Activated CD8-positive, alpha-beta T cell treated with anti-CD3 and anti-CD28 coated beads, Interleukin-2, amount 10 ng/mL, durations not matched to agents 7 days and 5 days (primary cell): ENCODE measurements at regions of chr17 and their contacts with region 1.

Region 1: DNA sequence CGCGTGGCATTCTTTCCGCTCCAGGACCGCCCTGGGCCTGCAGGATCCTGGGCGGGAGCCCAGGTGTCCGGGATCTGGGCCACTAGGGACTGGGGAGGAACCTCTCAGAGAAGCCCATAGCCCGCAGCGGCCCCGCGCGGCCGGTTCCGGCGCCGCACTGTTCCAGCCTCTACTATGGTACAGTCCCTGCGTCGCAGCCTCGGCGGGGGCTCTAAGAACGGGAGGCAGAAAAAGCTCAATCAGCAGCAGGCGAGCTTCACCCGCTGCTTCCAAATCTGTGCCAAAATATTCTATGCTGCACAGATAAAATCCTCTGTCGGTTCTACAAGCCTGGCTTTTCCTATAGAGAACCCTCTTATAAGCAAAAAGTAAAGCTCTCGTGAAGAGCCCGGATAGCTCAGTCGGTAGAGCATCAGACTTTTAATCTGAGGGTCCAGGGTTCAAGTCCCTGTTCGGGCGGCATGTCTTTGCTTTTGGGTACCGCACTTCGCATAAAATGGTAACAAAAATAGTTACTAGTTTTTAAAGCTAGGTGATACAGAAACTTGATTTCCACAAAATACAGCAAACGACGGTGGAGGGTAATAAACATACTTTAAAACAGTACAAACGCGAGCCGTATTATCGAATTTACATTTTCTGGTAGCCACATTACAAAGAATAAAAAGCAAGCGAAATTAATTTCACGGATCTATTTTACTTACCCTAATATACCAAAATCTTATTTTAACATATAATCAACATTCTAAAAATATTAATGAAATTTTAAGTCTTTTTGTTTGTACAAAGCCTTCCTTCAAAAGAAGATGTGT is 661 bp upstream of the ALOXE3 start:
- DNase-seq: peak; percentile 90
- ATAC-seq: peak; percentile 70
- H3K4me3 Mint-ChIP-seq: peak overlapping the region; percentile 89
- H3K27ac Mint-ChIP-seq: peak overlapping the region; percentile 95
- H3K4me1 Mint-ChIP-seq: peaks cover 51% of the 10 kb centered on the region
- H3K27me3 Mint-ChIP-seq: peaks cover 57% of the 10 kb centered on the region

Region 2: DNA sequence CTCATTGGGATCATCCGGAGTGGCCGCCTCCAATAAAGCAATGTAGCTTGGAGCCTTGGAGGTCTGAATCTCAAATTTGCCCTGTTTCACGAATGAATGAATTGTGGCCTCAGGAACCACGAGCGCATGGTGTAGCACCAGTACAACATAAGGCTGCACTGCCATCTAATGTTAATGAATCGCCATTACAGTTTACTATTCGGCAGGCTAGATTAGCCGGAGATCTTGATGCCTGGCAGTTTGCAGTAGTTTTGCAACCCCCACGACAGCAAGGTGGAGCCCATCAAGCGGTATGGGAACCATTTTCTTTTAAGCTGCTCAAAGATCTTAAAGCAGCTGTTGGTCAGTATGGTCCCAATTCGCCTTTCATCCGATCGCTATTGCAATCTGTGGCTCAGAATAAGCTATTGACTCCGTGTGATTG is 61.3 kb before region 1 on chr17:
- CTCF ChIA-PET with region 1: interaction called, 90 read pairs
- POLR2A ChIA-PET with region 1: no interaction called
- DNase-seq: peak; percentile 59
- ATAC-seq: peak; percentile 72
- H3K4me3 Mint-ChIP-seq: no peak overlapping the region
- H3K27ac Mint-ChIP-seq: no peak overlapping the region
- H3K4me1 Mint-ChIP-seq: peaks cover 32% of the 10 kb centered on the region
- H3K27me3 Mint-ChIP-seq: peaks cover 44% of the 10 kb centered on the region

Region 3: GRCh38 chr17:8091033-8091687 is 27.8 kb before region 1 on chr17:
- CTCF ChIA-PET with region 1: interaction called, 93 read pairs
- POLR2A ChIA-PET with region 1: no interaction called
- DNase-seq: no peak
- ATAC-seq: no peak
- H3K4me3 Mint-ChIP-seq: no peak overlapping the region
- H3K27ac Mint-ChIP-seq: no peak overlapping the region
- H3K4me1 Mint-ChIP-seq: peaks cover 6% of the 10 kb centered on the region
- H3K27me3 Mint-ChIP-seq: peaks cover 24% of the 10 kb centered on the region

Region 4: DNA sequence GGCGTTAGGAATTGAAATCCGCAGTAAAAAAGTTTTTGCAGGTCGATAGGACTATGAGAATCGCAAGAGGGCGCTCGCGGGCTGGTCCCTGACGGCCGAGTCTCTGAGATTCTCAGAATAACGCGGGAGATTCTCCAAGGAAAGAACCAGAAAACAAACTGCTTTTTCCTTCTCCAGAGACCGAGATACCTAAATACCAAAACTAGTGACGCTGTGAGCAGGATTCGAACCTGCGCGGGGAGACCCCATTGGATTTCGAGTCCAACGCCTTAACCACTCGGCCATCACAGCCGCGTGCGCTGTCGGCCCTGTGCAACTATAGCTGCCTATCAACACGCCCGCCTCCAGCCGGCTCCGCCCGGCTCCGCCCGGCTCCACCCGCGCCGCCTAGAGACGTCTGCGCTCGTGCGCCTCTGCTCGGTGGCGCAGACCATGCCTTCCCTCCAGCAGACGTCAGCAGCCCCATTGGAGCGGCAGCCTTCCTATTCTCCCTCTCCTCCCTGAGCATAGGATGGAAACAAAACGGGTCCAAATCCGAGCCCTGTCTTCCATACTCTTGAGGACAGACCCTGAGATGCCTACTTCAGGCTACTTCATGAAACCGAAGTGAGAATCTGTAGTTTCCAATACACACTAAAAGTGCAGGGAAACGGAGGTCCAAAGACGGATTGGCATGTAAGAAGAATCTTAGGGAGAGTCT is 19.8 kb after region 1 on chr17:
- CTCF ChIA-PET with region 1: interaction called, 52 read pairs
- POLR2A ChIA-PET with region 1: interaction called, 3 read pairs
- DNase-seq: peak; percentile 98
- ATAC-seq: peak; percentile 93
- H3K4me3 Mint-ChIP-seq: no peak overlapping the region
- H3K27ac Mint-ChIP-seq: no peak overlapping the region
- H3K4me1 Mint-ChIP-seq: peaks cover 5% of the 10 kb centered on the region
- H3K27me3 Mint-ChIP-seq: peaks cover 4% of the 10 kb centered on the region

Region 5: DNA sequence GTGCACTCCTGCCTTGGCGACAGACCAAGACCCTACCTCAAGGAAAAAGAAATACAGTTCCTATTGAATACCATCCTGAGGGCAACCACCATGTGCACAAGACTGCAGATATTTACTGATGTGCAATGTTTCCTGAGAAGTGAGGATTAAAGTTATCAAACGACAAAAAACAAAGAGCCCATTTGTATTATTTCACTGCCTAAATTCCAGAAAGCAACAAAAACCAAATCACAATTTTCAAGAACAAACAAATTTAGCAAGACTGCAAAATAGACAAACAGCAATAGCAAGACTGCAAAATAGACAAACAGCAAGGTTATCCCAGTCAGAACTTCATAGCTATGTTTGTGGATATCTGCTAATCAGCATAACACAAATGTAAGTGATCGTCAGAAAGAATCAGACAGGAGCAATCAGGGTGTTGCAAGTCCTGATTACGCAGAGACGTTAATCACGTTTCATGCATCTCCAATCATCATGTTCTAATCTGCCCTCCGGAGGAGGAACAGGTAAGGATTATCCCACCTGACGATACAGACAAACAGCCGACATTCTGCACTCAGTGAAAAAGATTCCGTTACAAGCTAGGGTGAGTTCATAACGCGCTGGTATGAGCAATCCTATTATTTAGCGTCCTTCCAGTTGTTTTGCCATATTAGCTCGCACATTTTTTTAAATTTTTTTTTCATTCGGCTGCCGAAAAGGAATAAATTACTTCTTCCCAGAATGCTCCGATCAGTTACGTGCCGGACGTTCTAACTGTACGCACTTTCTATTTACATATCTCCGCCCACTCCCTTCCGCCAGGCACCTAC is 54.3 kb after region 1 on chr17:
- CTCF ChIA-PET with region 1: interaction called, 6 read pairs
- POLR2A ChIA-PET with region 1: interaction called, 52 read pairs
- DNase-seq: peak; percentile 90
- ATAC-seq: peak; percentile 79
- H3K4me3 Mint-ChIP-seq: peak overlapping the region; percentile 85
- H3K27ac Mint-ChIP-seq: peak overlapping the region; percentile 99
- H3K4me1 Mint-ChIP-seq: peaks cover 50% of the 10 kb centered on the region
- H3K27me3 Mint-ChIP-seq: no peaks in the 10 kb centered on the region

Region 6: DNA sequence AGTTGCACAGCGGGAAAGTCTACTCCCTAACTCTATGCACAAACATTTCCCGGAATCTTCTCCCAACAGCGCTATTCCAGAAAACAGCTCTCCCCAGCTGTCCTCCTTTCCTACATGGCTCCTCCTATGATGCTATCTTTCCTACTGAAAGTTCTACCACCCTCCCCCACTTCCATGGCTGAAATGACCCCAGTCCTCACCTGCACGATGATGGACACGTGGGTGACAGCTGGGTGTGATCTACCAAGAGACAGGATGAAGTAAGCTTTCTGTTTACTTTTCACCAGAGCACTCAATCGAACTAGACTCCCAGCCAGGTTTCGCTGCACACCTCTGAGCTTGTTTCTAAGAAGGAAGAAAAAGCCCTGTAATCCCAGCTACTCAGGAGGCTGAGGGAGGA is 118.2 kb after region 1 on chr17:
- CTCF ChIA-PET with region 1: no interaction called
- POLR2A ChIA-PET with region 1: no interaction called
- DNase-seq: no peak
- ATAC-seq: no peak
- H3K4me3 Mint-ChIP-seq: no peak overlapping the region
- H3K27ac Mint-ChIP-seq: no peak overlapping the region
- H3K4me1 Mint-ChIP-seq: peaks cover 6% of the 10 kb centered on the region
- H3K27me3 Mint-ChIP-seq: no peaks in the 10 kb centered on the region

Region 7: DNA sequence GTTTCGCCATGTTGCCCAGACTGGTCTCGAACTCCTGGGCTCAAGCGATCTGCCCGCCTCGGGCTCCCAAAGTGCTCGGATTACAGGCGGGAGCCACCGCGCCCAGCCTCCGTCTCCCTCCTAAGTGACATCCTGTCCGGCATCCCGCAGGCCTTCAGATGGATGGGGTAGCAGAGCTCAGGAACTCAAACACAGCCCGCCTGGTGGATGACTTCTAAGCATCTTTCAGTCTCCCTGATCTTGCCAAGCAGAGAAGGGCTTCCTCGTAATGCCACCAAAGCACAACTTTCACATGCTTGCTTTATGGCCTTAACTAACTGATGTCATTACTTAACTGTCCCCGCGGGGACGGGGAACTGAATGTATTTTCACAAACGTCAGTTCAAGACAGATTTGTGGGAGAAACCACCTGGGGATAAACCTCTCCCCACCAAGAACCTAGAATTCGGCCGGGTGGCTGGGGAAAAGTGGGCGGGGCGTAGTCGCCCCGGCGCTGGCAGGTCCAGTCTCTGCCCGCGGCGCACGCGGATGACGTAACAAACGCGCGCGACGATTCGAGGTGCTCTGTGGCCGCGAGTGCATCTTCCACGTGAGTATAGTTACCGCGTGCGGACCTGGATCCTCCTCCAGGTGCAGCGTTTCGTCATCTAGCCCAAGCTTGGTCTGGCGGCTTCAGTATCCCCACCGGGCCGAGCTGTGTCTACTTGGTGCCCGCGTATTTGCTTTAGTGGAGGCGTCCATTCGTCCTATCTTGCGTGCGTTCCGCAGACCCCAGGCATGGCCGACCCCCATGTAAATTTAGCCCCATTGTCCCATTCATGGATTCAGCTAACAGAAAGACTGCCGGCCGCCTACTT is 130.0 kb after region 1 on chr17 and contains the start of gene PFAS:
- CTCF ChIA-PET with region 1: interaction called, 26 read pairs
- POLR2A ChIA-PET with region 1: interaction called, 5 read pairs
- DNase-seq: peak; percentile 97
- ATAC-seq: peak; percentile 71
- H3K4me3 Mint-ChIP-seq: peak within 1 kb of the TSS; percentile 96
- H3K27ac Mint-ChIP-seq: peak within 1 kb of the TSS; percentile 99
- H3K4me1 Mint-ChIP-seq: peaks cover 39% of the 10 kb centered on the region
- H3K27me3 Mint-ChIP-seq: no peaks in the 10 kb centered on the region
- total RNA-seq, gene PFAS: 78.3 to 80.2 TPM

Region 8: GRCh38 chr17:8275421-8276290 is 156.7 kb after region 1 on chr17:
- CTCF ChIA-PET with region 1: no interaction called
- POLR2A ChIA-PET with region 1: no interaction called
- DNase-seq: no peak
- ATAC-seq: no peak
- H3K4me3 Mint-ChIP-seq: no peak overlapping the region
- H3K27ac Mint-ChIP-seq: no peak overlapping the region
- H3K4me1 Mint-ChIP-seq: no peaks in the 10 kb centered on the region
- H3K27me3 Mint-ChIP-seq: no peaks in the 10 kb centered on the region